GM10248 (cell line): ENCODE measurements at regions of chr1 and their contacts with region 1.

Region 1: DNA sequence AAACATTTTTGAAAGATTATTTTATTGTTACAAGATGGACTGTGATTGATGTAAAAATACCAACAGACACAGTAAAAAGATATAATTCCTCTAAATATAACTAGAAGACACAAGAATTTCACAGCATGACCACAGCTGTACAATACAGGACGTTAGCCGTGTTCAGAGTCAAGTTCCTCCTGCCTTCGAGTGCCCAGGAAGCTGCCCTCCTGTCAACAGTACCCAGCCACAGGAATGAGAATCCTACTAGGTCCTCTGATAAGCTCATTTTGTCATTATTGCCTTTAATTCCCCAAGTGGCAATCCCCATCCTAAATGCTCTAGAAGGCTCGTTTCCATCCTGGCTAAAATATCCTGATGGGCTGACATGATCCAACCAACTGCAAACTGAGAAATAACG is 16.4 kb upstream of the CAPN2 start:
- DNase-seq: no peak
- CTCF ChIP-seq: no peak

Region 2: DNA sequence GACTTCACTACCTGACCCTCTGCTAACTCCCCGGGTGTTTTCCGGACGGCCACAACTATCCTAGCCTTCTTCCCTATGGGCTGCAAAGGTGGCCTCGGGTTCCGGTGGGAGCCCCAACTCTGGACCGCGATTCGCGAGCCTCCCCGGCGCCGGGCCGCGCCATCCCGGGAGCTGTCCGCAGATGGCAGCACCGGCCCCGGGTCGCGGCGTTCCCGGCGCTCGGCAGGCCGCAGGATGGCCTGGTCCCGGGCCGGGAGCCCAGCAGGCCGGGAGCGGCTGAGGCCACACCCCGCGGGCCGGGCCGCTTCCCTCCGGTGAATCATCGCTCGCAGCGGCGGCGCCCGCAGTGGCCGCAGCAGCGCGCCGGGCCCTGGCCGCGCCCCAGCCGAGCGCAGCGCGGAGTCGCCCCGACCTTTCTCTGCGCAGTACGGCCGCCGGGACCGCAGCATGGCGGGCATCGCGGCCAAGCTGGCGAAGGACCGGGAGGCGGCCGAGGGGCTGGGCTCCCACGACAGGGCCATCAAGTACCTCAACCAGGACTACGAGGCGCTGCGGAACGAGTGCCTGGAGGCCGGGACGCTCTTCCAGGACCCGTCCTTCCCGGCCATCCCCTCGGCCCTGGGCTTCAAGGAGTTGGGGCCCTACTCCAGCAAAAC is 16.4 kb after region 1 on chr1 and contains the start of gene CAPN2:
- CTCF ChIA-PET with region 1: interaction called, 13 read pairs
- POLR2A ChIA-PET with region 1: no interaction called
- DNase-seq: peak; percentile 74
- CTCF ChIP-seq: peak; percentile 51

Region 3: DNA sequence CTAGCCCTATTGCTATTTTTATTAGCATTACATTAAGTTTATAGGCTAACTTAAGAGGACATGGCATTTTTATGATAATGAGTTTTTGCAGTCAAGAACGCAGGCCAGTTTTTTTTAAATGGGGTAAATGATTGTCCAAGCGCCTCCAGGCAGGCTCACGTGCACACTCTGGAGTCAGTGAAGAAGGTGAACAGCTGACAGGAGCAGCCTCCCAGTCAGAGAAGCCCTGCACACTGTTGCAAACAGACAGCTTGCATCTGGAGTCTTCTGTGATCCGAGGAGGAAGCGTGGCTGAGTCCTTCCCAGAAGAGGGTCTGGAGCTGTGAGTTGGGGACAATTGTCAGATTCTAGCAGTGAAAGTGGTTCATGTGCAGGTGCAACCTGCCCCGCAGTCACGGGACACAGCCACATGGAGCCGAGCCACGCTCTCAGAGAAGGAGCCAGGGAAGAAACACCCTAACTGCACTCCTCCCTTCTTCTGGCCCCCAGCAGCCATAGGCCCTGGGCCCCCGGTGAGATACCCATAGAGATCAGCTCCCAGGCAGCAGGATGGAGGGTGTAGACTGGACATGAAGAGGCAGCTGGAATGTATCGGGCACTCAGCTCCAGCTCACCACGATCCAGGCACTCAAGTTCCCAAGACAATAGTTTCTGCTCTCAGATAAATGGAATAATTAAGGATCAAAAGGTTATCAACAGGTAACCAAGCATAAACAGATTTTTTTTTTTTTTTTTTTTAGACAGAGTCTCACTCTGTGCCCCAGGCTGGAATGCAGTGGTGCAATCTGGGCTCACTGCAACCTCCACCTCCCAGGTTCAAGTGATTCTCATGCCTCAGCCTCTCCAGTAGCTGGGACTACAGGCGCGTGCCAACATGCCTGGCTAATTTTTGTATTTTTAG is 42.8 kb after region 1 on chr1:
- CTCF ChIA-PET with region 1: interaction called, 16 read pairs
- POLR2A ChIA-PET with region 1: no interaction called
- DNase-seq: no peak
- CTCF ChIP-seq: no peak

Region 4: DNA sequence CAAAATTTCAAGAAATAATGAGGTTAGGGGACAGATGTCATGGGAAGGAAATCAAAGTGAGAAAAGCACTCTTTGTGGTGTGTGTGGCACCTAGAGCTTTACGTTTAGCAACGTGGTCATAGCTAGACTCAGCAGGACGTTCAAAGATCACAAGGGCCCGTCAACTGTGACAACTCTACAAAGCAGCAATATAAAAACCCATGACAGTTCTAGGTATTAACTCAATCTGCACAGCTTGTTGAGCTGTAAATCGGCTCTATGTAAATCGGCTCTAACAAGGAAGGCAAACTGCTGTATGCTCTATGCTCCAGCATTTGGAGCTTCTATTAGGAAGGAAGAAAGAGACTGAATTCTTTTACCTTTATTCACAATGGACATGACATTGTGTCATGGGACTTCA is 85.0 kb after region 1 on chr1:
- CTCF ChIA-PET with region 1: no interaction called
- POLR2A ChIA-PET with region 1: no interaction called
- DNase-seq: no peak
- CTCF ChIP-seq: no peak

Region 5: GRCh38 chr1:223794136-223794880 is 98.4 kb after region 1 on chr1:
- CTCF ChIA-PET with region 1: no interaction called
- POLR2A ChIA-PET with region 1: no interaction called
- DNase-seq: no peak
- CTCF ChIP-seq: no peak